ENCODE measurements at regions of chr7 and their contacts with region 1.

Region 1: GRCh38 chr7:30983042-30983913 is 19.5 kb downstream of the GHRHR start:
- DNase-seq: peak; percentile 75
- H3K4me3 Mint-ChIP-seq: no peak overlapping the region
- H3K27ac Mint-ChIP-seq: no peak overlapping the region
- H3K4me1 Mint-ChIP-seq: peaks cover 11% of the 10 kb centered on the region
- H3K27me3 Mint-ChIP-seq: peaks cover 66% of the 10 kb centered on the region
- CTCF ChIP-seq: peak; percentile 86

Region 2: GRCh38 chr7:30931161-30931928 is 51.9 kb before region 1 on chr7:
- CTCF ChIA-PET with region 1: interaction called, 15 read pairs
- POLR2A ChIA-PET with region 1: no interaction called
- intact Hi-C with region 1: no loop called
- DNase-seq: no peak
- H3K4me3 Mint-ChIP-seq: no peak overlapping the region
- H3K27ac Mint-ChIP-seq: no peak overlapping the region
- H3K4me1 Mint-ChIP-seq: no peaks in the 10 kb centered on the region
- H3K27me3 Mint-ChIP-seq: peaks cover 12% of the 10 kb centered on the region
- CTCF ChIP-seq: no peak

Region 3: GRCh38 chr7:30996256-30996655 is 13.0 kb after region 1 on chr7:
- CTCF ChIA-PET with region 1: interaction called, 54 read pairs
- POLR2A ChIA-PET with region 1: no interaction called
- intact Hi-C with region 1: no loop called
- DNase-seq: no peak
- H3K4me3 Mint-ChIP-seq: no peak overlapping the region
- H3K27ac Mint-ChIP-seq: no peak overlapping the region
- H3K4me1 Mint-ChIP-seq: no peaks in the 10 kb centered on the region
- H3K27me3 Mint-ChIP-seq: no peaks in the 10 kb centered on the region
- CTCF ChIP-seq: no peak

Region 4: GRCh38 chr7:31074120-31074383 is 90.8 kb after region 1 on chr7:
- CTCF ChIA-PET with region 1: interaction called, 22 read pairs
- POLR2A ChIA-PET with region 1: no interaction called
- intact Hi-C with region 1: no loop called
- DNase-seq: peak; percentile 40
- H3K4me3 Mint-ChIP-seq: no peak overlapping the region
- H3K27ac Mint-ChIP-seq: no peak overlapping the region
- H3K4me1 Mint-ChIP-seq: no peaks in the 10 kb centered on the region
- H3K27me3 Mint-ChIP-seq: peaks cover 40% of the 10 kb centered on the region
- CTCF ChIP-seq: no peak

Region 5: GRCh38 chr7:31122649-31123058 is 139.4 kb after region 1 on chr7:
- CTCF ChIA-PET with region 1: interaction called, 743 read pairs
- POLR2A ChIA-PET with region 1: interaction called, 16 read pairs
- intact Hi-C with region 1: loop called (anchors 1 kb)
- DNase-seq: peak; percentile 83
- H3K4me3 Mint-ChIP-seq: no peak overlapping the region
- H3K27ac Mint-ChIP-seq: no peak overlapping the region
- H3K4me1 Mint-ChIP-seq: peaks cover 6% of the 10 kb centered on the region
- H3K27me3 Mint-ChIP-seq: peaks cover 34% of the 10 kb centered on the region
- CTCF ChIP-seq: peak; percentile 85